Adrenal gland (tissue), 19 donors: ENCODE measurements at regions of chr16 and their contacts with region 1.

Region 1: DNA sequence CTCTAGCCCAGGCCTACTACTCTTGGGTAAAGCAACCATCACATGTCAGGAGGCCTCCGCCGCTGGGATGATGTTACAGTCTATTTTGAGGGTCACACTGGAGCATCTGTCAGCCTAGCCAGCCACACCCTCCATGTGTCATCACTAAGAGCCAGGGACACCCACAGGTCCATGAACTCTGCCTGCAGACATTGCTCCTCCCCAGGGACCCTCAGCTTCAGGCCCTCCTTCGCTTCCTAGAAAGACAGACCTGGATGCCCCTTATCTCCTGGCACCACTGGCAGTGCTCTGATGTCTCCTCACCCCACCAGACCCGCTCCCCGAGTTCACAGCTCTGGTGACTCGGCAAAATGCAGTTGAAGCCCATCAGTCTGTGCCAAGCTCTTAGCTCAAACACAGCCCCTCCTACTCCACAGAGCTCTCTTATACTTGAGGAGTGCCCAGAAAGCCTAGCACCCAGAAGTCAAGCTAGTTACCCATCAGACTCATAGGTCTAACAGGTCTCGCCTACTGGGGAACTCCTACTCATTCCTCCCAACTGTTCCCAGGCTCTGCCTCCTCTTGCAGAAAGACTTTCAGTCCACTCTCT is 5.9 kb downstream of the RANBP10 start:
- DNase-seq: peak; percentile 31 to 77 (median 62)
- H3K4me3 ChIP-seq: no peak overlapping the region
- H3K27ac ChIP-seq: peak overlapping the region in 1 of 5 donors; percentile 50
- H3K4me1 ChIP-seq: peaks cover 12 to 16% of the 10 kb centered on the region in 2 donors
- H3K27me3 ChIP-seq: no peaks in the 10 kb centered on the region
- CTCF ChIP-seq: no peak
- POLR2A ChIP-seq: no peak

Region 2: GRCh38 chr16:66639091-66639885 is 1161.1 kb before region 1 on chr16:
- intact Hi-C with region 1: no loop called
- DNase-seq: peak in 1 of 7 donors; percentile 20
- H3K4me3 ChIP-seq: no peak overlapping the region
- H3K27ac ChIP-seq: no peak overlapping the region
- H3K4me1 ChIP-seq: peaks cover 0 to 6% of the 10 kb centered on the region in 2 donors
- H3K27me3 ChIP-seq: no peaks in the 10 kb centered on the region
- CTCF ChIP-seq: no peak
- POLR2A ChIP-seq: no peak

Region 3: GRCh38 chr16:67667817-67668494 is 132.5 kb before region 1 on chr16:
- intact Hi-C with region 1: loop called in 1 of 2 experiments (anchors 5 kb)
- DNase-seq: peak; percentile 84 to 98 (median 94)
- H3K4me3 ChIP-seq: peak overlapping the region in 1 of 4 donors; percentile 65
- H3K27ac ChIP-seq: peak overlapping the region in 4 of 5 donors; percentile 77 to 91 (median 86)
- H3K4me1 ChIP-seq: peaks cover 10 to 32% of the 10 kb centered on the region in 2 donors
- H3K27me3 ChIP-seq: no peaks in the 10 kb centered on the region
- CTCF ChIP-seq: peak; percentile 66 to 98 (median 96)
- POLR2A ChIP-seq: peak in 1 of 2 donors; percentile 55